AG04450 (cell line): ENCODE measurements at regions of chr7 and their contacts with region 1.

Region 1: GRCh38 chr7:7681179-7681935 is 37.0 kb downstream of the RPA3 start:
- DNase-seq: no peak
- H3K4me3 ChIP-seq: no peak overlapping the region
- H3K27ac ChIP-seq: no peak overlapping the region
- H3K27me3 ChIP-seq: no peaks in the 10 kb centered on the region
- CTCF ChIP-seq: peak; percentile 70

Region 2: GRCh38 chr7:7713730-7714129 is 32.4 kb after region 1 on chr7:
- CTCF ChIA-PET with region 1: interaction called, 10 read pairs
- POLR2A ChIA-PET with region 1: no interaction called
- DNase-seq: no peak
- H3K4me3 ChIP-seq: no peak overlapping the region
- H3K27ac ChIP-seq: no peak overlapping the region
- H3K27me3 ChIP-seq: no peaks in the 10 kb centered on the region
- CTCF ChIP-seq: no peak

Region 3: DNA sequence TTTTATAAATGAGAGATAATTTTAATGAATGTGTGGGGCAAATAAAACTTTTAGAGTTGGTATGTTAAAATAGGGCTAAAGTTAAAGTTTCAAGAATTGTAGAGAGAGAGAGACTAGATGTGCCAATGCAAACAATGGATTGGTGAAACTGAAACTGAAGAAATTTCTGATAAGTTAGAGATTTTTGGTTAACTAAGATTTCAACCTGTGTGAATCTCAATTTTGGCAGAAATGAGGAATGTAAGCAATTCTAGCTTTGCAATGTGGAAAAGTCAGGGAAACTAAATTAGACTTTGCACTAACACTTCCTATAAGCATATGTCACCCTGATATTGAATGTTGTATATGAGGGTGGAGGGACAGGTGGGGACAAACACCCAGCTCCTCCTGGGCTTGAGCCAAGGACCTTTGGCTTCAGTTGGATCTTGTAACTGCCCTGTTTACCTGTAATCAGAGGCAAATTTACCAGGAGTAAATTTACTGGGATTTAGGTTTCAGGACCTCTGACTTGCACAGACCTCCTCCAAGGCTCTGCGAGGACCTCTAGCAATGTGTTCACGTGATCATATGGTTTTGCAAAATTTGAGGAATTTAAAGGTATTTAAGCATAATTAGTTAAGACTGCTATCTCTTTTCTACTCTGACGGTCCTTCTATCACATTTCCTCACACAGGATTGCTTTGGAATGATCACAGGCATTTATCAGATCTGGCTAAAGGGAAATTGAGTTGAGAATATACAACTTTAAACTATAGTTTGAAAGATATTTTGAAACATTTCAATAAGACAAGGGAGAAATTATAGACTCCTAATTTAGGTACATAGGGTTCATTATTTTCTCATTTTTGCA is 70.1 kb after region 1 on chr7:
- CTCF ChIA-PET with region 1: interaction called, 10 read pairs
- POLR2A ChIA-PET with region 1: no interaction called
- DNase-seq: no peak
- H3K4me3 ChIP-seq: no peak overlapping the region
- H3K27ac ChIP-seq: no peak overlapping the region
- H3K27me3 ChIP-seq: no peaks in the 10 kb centered on the region
- CTCF ChIP-seq: no peak

Region 4: DNA sequence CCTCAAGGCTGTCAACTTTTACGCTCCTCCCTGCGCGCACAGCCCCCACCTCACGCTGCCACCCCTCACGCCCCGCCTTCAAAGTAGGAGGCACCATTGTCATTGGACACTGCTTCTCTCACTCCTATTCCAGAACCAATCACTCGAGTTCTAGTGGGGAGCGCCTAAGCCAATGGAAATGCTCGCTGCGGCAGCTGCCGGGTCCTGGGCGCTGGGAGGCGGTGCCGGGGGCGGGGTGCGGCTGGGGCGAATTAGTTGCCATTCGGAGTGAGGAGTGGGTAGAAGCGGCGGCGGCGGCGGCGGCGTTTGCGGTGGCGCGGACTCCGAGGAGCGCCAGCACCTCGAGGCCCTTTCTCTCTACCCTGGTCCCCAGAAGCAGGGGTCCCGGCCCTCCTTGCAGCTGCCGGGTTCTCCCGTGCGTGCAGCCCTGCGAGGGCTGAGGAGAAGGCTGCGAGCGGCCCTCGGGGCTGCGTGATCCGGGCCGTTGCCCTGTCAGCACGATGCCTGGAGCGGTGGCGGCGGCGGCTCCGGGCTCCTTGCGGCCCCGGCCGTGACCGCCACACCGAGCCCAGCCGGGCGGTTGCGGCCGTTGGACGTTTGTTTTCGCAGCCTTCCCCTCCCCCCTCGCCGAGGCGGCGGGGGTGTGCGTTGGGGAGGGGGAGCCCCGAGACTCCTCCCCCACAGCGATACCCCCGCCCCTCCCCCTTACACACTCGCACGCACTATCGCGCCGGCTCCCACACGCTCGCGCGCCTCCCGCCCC is 287.4 kb after region 1 on chr7 and contains the start of gene GLCCI1:
- CTCF ChIA-PET with region 1: interaction called, 11 read pairs
- POLR2A ChIA-PET with region 1: interaction called, 3 read pairs
- DNase-seq: peak; percentile 89
- H3K4me3 ChIP-seq: peak within 1 kb of the TSS; percentile 90
- H3K27ac ChIP-seq: peak within 1 kb of the TSS; percentile 79
- H3K27me3 ChIP-seq: no peaks in the 10 kb centered on the region
- CTCF ChIP-seq: no peak
- polyA plus RNA-seq, gene GLCCI1: 8.1 and 13.5 TPM in 2 replicates

Region 5: GRCh38 chr7:8065356-8065813 is 384.0 kb after region 1 on chr7:
- CTCF ChIA-PET with region 1: no interaction called
- POLR2A ChIA-PET with region 1: no interaction called
- DNase-seq: peak; percentile 30
- H3K4me3 ChIP-seq: no peak overlapping the region
- H3K27ac ChIP-seq: peak overlapping the region; percentile 58
- H3K27me3 ChIP-seq: no peaks in the 10 kb centered on the region
- CTCF ChIP-seq: no peak

Region 6: GRCh38 chr7:8089036-8089780 is 407.9 kb after region 1 on chr7:
- CTCF ChIA-PET with region 1: interaction called, 14 read pairs
- POLR2A ChIA-PET with region 1: no interaction called
- DNase-seq: no peak
- H3K4me3 ChIP-seq: no peak overlapping the region
- H3K27ac ChIP-seq: no peak overlapping the region
- H3K27me3 ChIP-seq: no peaks in the 10 kb centered on the region
- CTCF ChIP-seq: no peak